OCI-LY7 (cell line): ENCODE measurements at regions of chr7 and their contacts with region 1.

Region 1: DNA sequence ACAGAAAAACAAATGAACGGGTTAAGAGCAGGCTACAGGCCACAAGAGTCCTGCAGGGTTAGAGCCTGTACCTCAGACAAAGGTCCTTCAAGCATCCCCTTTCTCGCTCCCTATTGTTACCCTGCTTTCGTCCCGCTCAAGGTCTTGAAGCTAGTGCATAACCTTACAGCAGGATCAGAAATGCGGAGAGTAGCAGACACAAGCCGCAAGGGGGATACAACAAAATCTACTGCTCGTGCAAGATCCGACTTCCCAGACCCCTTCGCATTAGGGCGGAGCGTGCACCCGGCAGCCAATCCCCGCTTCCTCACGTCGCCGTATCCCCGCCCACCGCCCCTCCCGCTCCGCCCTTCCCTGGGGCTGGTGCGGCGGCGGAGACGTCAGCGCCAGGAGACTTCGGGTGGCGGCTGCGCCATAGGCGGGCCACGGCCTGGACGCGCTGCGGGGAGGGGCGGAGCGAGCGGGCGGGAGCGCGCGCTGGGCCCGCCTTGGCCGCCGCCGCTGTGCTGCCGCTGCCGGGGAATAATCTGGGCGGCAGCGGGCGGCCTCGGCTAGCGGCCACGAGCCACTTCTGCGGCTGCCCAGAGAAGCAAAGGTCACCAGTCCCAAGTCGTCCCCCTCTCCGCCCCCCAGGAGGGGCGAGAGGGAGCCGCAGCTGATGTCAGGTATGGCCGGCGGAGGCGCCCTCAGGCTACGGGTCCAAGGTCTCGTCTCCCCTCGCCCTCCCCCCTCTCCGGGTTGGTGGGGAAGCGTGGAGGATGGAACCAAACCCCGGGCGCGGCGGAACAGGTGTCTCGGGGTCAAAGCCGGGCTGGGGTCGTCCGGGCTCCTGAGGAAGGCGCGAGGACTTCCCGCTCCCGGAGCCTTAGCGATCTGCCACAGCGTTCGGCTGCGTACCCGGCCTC is at the start of gene C1GALT1:
- DNase-seq: peak; percentile 97
- H3K4me3 ChIP-seq: peak within 1 kb of the TSS; percentile 85
- H3K27ac ChIP-seq: peak within 1 kb of the TSS; percentile 94
- H3K4me1 ChIP-seq: peaks cover 26% of the 10 kb centered on the region
- CTCF ChIP-seq: peak; percentile 66
- total RNA-seq, gene C1GALT1: 18.9 and 28.9 TPM in 2 replicates

Region 2: GRCh38 chr7:6917258-6917657 is 265.1 kb before region 1 on chr7:
- CTCF ChIA-PET with region 1: no interaction called
- POLR2A ChIA-PET with region 1: no interaction called
- intact Hi-C with region 1: no loop called
- DNase-seq: no peak
- H3K4me3 ChIP-seq: no peak overlapping the region
- H3K27ac ChIP-seq: no peak overlapping the region
- H3K4me1 ChIP-seq: no peaks in the 10 kb centered on the region
- CTCF ChIP-seq: no peak

Region 3: GRCh38 chr7:7251742-7252141 is 69.3 kb after region 1 on chr7:
- CTCF ChIA-PET with region 1: no interaction called
- POLR2A ChIA-PET with region 1: interaction called, 9 read pairs
- intact Hi-C with region 1: loop called (anchors 1 kb)
- DNase-seq: peak; percentile 93
- H3K4me3 ChIP-seq: peak overlapping the region; percentile 39
- H3K27ac ChIP-seq: peak overlapping the region; percentile 76
- H3K4me1 ChIP-seq: peaks cover 71% of the 10 kb centered on the region
- CTCF ChIP-seq: no peak

Region 4: GRCh38 chr7:7321720-7322128 is 139.3 kb after region 1 on chr7:
- CTCF ChIA-PET with region 1: no interaction called
- POLR2A ChIA-PET with region 1: interaction called, 3 read pairs
- intact Hi-C with region 1: loop called (anchors 5 kb)
- DNase-seq: peak; percentile 76
- H3K4me3 ChIP-seq: no peak overlapping the region
- H3K27ac ChIP-seq: no peak overlapping the region
- H3K4me1 ChIP-seq: peaks cover 19% of the 10 kb centered on the region
- CTCF ChIP-seq: no peak

Region 5: GRCh38 chr7:7424151-7424873 is 241.9 kb after region 1 on chr7:
- CTCF ChIA-PET with region 1: no interaction called
- POLR2A ChIA-PET with region 1: no interaction called
- intact Hi-C with region 1: loop called (anchors 2 kb)
- DNase-seq: peak; percentile 65
- H3K4me3 ChIP-seq: peak overlapping the region; percentile 63
- H3K27ac ChIP-seq: no peak overlapping the region
- H3K4me1 ChIP-seq: no peaks in the 10 kb centered on the region
- CTCF ChIP-seq: peak; percentile 82

Region 6: DNA sequence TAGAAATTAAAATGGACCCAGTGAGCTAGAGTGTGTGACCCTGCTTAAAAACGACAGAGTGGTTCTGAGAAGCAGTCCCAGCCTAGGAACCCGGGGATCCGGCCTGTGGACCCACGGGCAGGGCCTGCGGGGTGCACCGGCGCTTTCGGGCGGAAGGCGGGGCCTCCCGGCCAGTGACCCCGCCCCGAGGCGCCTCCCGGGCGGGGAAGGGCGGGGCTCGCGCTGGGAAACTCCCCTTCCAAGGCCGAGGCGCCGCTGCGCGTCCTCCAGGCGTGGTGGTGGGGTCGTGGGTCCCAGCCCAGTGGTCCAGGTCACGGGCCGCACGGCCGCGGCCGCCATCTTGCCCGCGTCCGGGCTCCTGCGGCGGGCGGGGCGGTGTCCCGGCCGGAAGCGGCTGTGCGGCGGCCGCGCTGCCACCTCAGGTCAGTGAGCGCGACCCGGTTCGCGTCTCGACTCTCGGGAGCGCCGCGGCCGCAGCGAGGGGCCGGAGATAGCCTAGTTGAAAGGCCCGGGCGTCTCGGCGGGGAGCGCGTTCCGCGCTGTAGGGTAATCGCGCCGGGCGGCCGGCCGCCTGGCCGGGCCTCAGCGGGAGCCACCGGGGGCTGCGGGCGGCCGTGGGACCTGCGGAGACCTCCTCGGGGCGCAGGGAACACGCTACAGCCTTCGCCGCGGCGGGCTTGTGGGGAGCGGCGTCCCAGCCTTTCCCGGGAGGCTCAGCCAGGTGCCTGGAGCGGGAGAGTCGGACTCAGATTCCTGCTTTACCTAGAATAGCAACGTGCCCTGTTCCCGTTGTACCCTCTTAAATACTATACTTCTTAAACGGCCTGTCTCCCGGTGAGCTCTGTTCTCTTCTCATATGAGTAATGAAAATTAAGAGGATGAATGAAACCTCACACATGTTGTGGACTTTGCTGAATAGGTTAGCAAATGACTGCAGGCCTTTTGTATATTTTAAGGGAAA is 384.5 kb after region 1 on chr7 and contains the start of gene MIOS:
- CTCF ChIA-PET with region 1: no interaction called
- POLR2A ChIA-PET with region 1: interaction called, 4 read pairs
- intact Hi-C with region 1: loop called (anchors 2 kb)
- DNase-seq: peak; percentile 83
- H3K4me3 ChIP-seq: peak within 1 kb of the TSS; percentile 79
- H3K27ac ChIP-seq: peak within 1 kb of the TSS; percentile 63
- H3K4me1 ChIP-seq: peaks cover 32% of the 10 kb centered on the region
- CTCF ChIP-seq: no peak
- total RNA-seq, gene MIOS: 18.9 and 24.9 TPM in 2 replicates